A549 (cell line): ENCODE measurements at regions of chr11 and their contacts with region 1.

Region 1: GRCh38 chr11:116787786-116788486 is at the start of gene ZPR1:
- DNase-seq: peak; percentile 58 to 82
- ATAC-seq: peak; percentile 85 to 89
- H3K4me3 ChIP-seq: peak within 1 kb of the TSS; percentile 94
- H3K27ac ChIP-seq: peak within 1 kb of the TSS; percentile 94 to 97
- H3K4me1 ChIP-seq: peaks cover 10% of the 10 kb centered on the region; the same call in 1 of the 3 replicates
- CTCF ChIP-seq: no peak
- EP300 ChIP-seq: no peak
- POLR2A ChIP-seq: peak; percentile 76
- RAD21 ChIP-seq: no peak
- polyA plus RNA-seq, gene ZPR1: 65.6 and 77.5 TPM in 2 replicates

Region 2: GRCh38 chr11:116811194-116811593 is 23.3 kb after region 1 on chr11:
- CTCF ChIA-PET with region 1: interaction called, 11 read pairs
- POLR2A ChIA-PET with region 1: no interaction called
- DNase-seq: no peak
- ATAC-seq: no peak
- H3K4me3 ChIP-seq: no peak overlapping the region
- H3K27ac ChIP-seq: no peak overlapping the region
- H3K4me1 ChIP-seq: peaks cover 7% of the 10 kb centered on the region; the same call in 1 of the 3 replicates
- CTCF ChIP-seq: no peak
- EP300 ChIP-seq: no peak
- POLR2A ChIP-seq: no peak
- RAD21 ChIP-seq: no peak

Region 3: GRCh38 chr11:116835791-116836631 is 48.1 kb after region 1 on chr11:
- CTCF ChIA-PET with region 1: interaction called, 56 read pairs
- POLR2A ChIA-PET with region 1: interaction called, 10 read pairs
- DNase-seq: peak; percentile 67 to 89
- ATAC-seq: peak; percentile 87 to 92
- H3K4me3 ChIP-seq: peak overlapping the region; percentile 27
- H3K27ac ChIP-seq: peak overlapping the region; percentile 20 to 79; a peak in 5 of 6 replicates
- H3K4me1 ChIP-seq: 0 out of 3 replicates have a peak, but pooled peaks cover 4% of the 10 kb centered on the region
- CTCF ChIP-seq: peak; percentile 58
- EP300 ChIP-seq: no peak
- POLR2A ChIP-seq: peak; percentile 41
- RAD21 ChIP-seq: peak; percentile 52 to 63

Region 4: GRCh38 chr11:116879800-116880625 is 92.1 kb after region 1 on chr11:
- CTCF ChIA-PET with region 1: interaction called, 10 read pairs
- POLR2A ChIA-PET with region 1: no interaction called
- DNase-seq: peak; percentile 31 to 61
- ATAC-seq: peak; percentile 94 to 95; a peak in 5 of 6 replicates
- H3K4me3 ChIP-seq: no peak overlapping the region
- H3K27ac ChIP-seq: no peak overlapping the region
- H3K4me1 ChIP-seq: no peaks in the 10 kb centered on the region
- CTCF ChIP-seq: peak; percentile 75
- EP300 ChIP-seq: no peak
- POLR2A ChIP-seq: no peak
- RAD21 ChIP-seq: peak; percentile 79 to 84

Region 5: DNA sequence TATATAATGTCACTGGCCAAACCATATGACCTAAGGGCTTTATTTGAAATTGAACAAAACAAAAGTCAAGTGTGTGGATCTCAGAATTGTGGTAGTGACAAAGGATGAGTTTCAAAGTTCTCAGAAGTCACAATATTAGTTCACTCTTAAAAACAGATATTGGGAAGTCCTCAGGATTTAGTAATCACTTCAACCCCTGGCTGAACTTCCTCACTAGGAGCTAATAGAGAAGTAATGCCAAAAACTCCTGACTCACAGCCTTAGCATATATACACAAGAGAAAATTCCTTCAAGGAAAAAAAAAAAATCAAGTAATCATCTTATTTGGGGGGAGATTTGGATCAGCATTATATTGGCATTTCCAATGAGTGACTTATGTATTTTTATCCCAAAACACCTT is 125.1 kb after region 1 on chr11:
- CTCF ChIA-PET with region 1: no interaction called
- POLR2A ChIA-PET with region 1: no interaction called
- DNase-seq: peak in 1 of 2 experiments; percentile 22
- ATAC-seq: peak in 1 of 2 experiments; percentile 60; a peak in 3 of 6 replicates
- H3K4me3 ChIP-seq: no peak overlapping the region
- H3K27ac ChIP-seq: no peak overlapping the region
- H3K4me1 ChIP-seq: peaks cover 31% of the 10 kb centered on the region; the same call in 2 of the 3 replicates
- CTCF ChIP-seq: no peak
- EP300 ChIP-seq: no peak
- POLR2A ChIP-seq: no peak
- RAD21 ChIP-seq: no peak

Region 6: GRCh38 chr11:117020287-117020686 is 232.4 kb after region 1 on chr11:
- CTCF ChIA-PET with region 1: interaction called, 10 read pairs
- POLR2A ChIA-PET with region 1: no interaction called
- DNase-seq: no peak
- ATAC-seq: no peak
- H3K4me3 ChIP-seq: no peak overlapping the region
- H3K27ac ChIP-seq: peak overlapping the region in 1 of 2 experiments; percentile 60; a peak in 2 of 6 replicates
- H3K4me1 ChIP-seq: peaks cover 55% of the 10 kb centered on the region
- CTCF ChIP-seq: no peak
- EP300 ChIP-seq: no peak
- POLR2A ChIP-seq: no peak
- RAD21 ChIP-seq: no peak